Naive thymus-derived CD4-positive, alpha-beta T cell (primary cell): ENCODE measurements at regions of chr11 and their contacts with region 1.

Region 1: DNA sequence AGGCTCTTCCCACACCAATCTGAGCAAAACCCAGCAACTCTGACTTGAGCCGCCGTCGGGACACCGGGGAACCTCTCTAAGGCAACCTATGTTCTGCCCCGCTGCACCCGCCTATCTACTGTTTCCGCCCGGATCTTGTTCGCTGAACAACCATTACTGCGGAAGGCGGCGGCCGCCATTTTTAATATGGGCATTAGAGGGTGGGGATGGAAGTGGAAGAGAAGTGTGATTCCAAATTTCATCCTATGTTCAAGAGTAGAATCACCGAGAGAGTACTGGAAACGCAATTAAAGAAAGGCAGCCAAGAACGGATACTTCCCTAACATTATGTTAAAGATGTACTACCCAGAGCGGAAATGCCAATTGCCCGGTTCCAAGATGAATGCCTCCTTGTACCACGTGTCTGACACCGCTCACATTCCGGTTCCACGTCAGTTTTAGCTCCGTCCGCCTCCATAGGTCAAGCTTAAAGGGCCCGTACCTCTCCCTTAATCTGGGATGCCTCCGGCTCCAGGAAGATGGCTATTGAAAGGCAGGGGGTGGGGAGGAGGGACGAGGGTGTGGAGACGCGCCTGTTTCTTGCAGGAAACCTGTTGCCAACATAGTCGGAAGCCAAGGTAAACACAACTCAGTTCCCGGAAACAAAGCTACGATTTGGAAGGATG is at the start of gene DPAGT1:
- DNase-seq: peak; percentile 68 to 90 (median 86)
- ATAC-seq: peak; percentile 90
- H3K4me3 ChIP-seq: peak within 1 kb of the TSS; percentile 79
- H3K4me3 Mint-ChIP-seq: peak within 1 kb of the TSS; percentile 91 to 100 (median 96)
- H3K27ac ChIP-seq: peak within 1 kb of the TSS; percentile 95
- H3K27ac Mint-ChIP-seq: peak within 1 kb of the TSS; percentile 98 to 100 (median 99)
- H3K4me1 ChIP-seq: peaks cover 21 to 26% of the 10 kb centered on the region in 2 donors
- H3K4me1 Mint-ChIP-seq: peaks cover 24 to 64% (median 50%) of the 10 kb centered on the region in 7 donors
- H3K27me3 ChIP-seq: no peaks in the 10 kb centered on the region
- H3K27me3 Mint-ChIP-seq: no peaks in the 10 kb centered on the region
- total RNA-seq, gene DPAGT1: 21.9 to 63.9 (median 37.9) TPM

Region 2: DNA sequence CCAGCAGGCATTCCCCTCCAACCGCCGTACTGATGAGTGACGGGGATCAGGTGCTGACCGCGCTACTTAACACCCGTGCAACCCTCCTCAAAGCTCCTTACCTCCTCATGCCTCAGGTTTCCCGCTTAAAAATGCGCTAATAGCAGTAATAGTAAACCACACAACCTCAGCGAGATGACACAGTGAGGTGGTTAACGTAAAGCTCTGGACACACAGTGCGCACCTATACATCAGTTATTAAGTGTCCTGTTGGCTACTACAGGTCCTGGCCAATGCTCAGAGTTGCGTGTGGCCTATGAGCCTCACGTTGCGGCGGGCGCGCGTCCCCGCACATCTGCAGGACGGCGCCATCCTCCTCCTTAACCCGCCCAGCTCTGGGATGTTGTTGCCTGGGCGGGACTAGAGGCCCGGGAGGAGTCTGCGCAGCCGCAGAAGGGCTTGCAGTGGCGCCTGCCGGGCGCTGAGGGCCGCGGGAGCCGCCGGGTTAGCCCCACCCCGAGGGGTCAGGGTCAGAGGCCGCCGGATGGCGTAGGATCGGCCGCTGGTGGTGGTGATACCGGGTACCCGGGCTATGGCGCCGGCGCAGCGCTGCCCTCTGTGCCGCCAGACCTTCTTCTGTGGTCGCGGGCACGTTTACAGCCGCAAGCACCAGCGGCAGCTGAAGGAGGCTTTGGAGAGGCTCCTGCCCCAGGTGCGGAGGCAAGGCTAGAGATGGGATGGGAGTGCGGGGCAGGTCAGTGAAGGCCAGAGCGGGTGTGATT is 104.1 kb before region 1 on chr11 and contains the start of gene CENATAC:
- CTCF ChIA-PET with region 1: no interaction called
- POLR2A ChIA-PET with region 1: interaction called, 8 read pairs
- intact Hi-C with region 1: loop called (anchors 1 to 5 kb)
- DNase-seq: peak; percentile 91 to 98 (median 94)
- ATAC-seq: peak; percentile 98
- H3K4me3 ChIP-seq: peak within 1 kb of the TSS; percentile 91
- H3K4me3 Mint-ChIP-seq: peak within 1 kb of the TSS; percentile 87 to 99 (median 94)
- H3K27ac ChIP-seq: peak within 1 kb of the TSS; percentile 85
- H3K27ac Mint-ChIP-seq: peak within 1 kb of the TSS; percentile 87 to 98 (median 92)
- H3K4me1 ChIP-seq: peaks cover 6 to 16% of the 10 kb centered on the region in 2 donors
- H3K4me1 Mint-ChIP-seq: peaks cover 26 to 45% (median 37%) of the 10 kb centered on the region in 7 donors
- H3K27me3 ChIP-seq: no peaks in the 10 kb centered on the region
- H3K27me3 Mint-ChIP-seq: no peaks in the 10 kb centered on the region
- total RNA-seq, gene CENATAC: 53.5 to 136 (median 109) TPM

Region 3: GRCh38 chr11:119057000-119057769 is 44.7 kb before region 1 on chr11 and contains the start of gene HYOU1:
- CTCF ChIA-PET with region 1: interaction called, 4 read pairs
- POLR2A ChIA-PET with region 1: interaction called, 9 read pairs
- intact Hi-C with region 1: loop called (anchors 1 kb)
- DNase-seq: peak; percentile 97 to 98 (median 98)
- ATAC-seq: peak; percentile 98
- H3K4me3 ChIP-seq: peak within 1 kb of the TSS; percentile 73
- H3K4me3 Mint-ChIP-seq: peak within 1 kb of the TSS; percentile 90 to 99 (median 95)
- H3K27ac ChIP-seq: peak within 1 kb of the TSS; percentile 96
- H3K27ac Mint-ChIP-seq: peak within 1 kb of the TSS; percentile 86 to 99 (median 95)
- H3K4me1 ChIP-seq: peaks cover 18 to 20% of the 10 kb centered on the region in 2 donors
- H3K4me1 Mint-ChIP-seq: peaks cover 22 to 44% (median 35%) of the 10 kb centered on the region in 7 donors
- H3K27me3 ChIP-seq: no peaks in the 10 kb centered on the region
- H3K27me3 Mint-ChIP-seq: no peaks in the 10 kb centered on the region
- total RNA-seq, gene HYOU1: 77.8 to 198 (median 110) TPM

Region 4: GRCh38 chr11:119115484-119116234 is 13.8 kb after region 1 on chr11:
- CTCF ChIA-PET with region 1: interaction called, 13 read pairs
- POLR2A ChIA-PET with region 1: interaction called, 435 read pairs
- intact Hi-C with region 1: loop called in 1 of 2 experiments (anchors 1 kb)
- DNase-seq: peak in 7 of 9 donors; percentile 57 to 75 (median 72)
- ATAC-seq: peak; percentile 80
- H3K4me3 ChIP-seq: peak overlapping the region; percentile 31
- H3K4me3 Mint-ChIP-seq: peak overlapping the region; percentile 75 to 88 (median 84)
- H3K27ac ChIP-seq: peak overlapping the region; percentile 81
- H3K27ac Mint-ChIP-seq: peak overlapping the region; percentile 86 to 98 (median 97)
- H3K4me1 ChIP-seq: peaks cover 3 to 32% of the 10 kb centered on the region in 2 donors
- H3K4me1 Mint-ChIP-seq: peaks cover 34 to 63% (median 45%) of the 10 kb centered on the region in 7 donors
- H3K27me3 ChIP-seq: no peaks in the 10 kb centered on the region
- H3K27me3 Mint-ChIP-seq: no peaks in the 10 kb centered on the region

Region 5: DNA sequence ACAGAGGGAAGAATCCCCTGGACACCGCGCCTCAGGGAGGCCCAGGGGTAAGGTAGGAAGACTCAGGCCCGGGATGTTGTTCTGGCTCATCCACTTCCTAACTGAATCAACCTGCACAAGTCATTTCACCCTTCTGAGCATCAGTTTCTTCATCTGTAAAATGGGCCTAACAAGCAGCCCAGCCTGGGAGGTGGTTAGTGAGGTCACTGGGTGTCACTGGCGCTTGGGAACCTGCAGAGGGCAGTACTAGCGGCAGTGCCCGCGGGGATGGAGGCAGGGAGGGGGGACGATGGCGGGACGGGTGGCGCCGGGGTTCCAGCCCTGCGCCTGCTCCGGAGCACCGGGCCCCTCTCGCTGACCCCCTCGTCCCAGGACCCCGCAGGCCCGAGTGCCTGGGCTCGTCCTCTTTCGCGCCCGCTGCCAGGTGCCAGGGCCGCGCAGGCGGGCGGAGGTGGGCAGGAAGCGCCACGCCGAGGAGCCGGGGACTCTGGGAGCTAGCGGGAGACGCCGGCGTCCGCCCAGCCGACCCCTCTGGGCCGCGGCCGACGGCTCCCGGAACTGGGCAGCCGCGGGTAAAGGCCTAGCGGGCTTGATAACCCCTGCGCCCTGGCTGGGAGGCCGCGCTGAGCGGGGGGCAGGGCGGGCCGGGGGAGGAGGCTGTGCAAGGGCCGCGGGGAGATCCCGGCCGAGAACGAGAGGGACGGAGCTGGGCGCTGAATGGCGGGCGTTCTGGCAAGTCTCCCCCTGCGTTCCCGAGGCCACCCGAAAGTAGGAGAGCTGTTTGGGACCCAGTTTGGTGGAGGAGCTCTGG is 66.8 kb after region 1 on chr11 and contains the start of gene NLRX1:
- CTCF ChIA-PET with region 1: interaction called, 4 read pairs
- POLR2A ChIA-PET with region 1: interaction called, 8 read pairs
- intact Hi-C with region 1: loop called (anchors 2 to 5 kb)
- DNase-seq: peak; percentile 67 to 85 (median 82)
- ATAC-seq: peak; percentile 98
- H3K4me3 ChIP-seq: peak within 1 kb of the TSS; percentile 75
- H3K4me3 Mint-ChIP-seq: peak within 1 kb of the TSS; percentile 86 to 94 (median 90)
- H3K27ac ChIP-seq: peak within 1 kb of the TSS; percentile 73
- H3K27ac Mint-ChIP-seq: peak within 1 kb of the TSS; percentile 64 to 95 (median 87)
- H3K4me1 ChIP-seq: peaks cover 0 to 4% of the 10 kb centered on the region in 2 donors
- H3K4me1 Mint-ChIP-seq: peaks cover 4 to 25% (median 11%) of the 10 kb centered on the region in 7 donors
- H3K27me3 ChIP-seq: no peaks in the 10 kb centered on the region
- H3K27me3 Mint-ChIP-seq: no peaks in the 10 kb centered on the region
- total RNA-seq, gene NLRX1: 8.3 to 19.5 (median 9.8) TPM

Region 6: GRCh38 chr11:119273721-119274120 is 171.8 kb after region 1 on chr11:
- CTCF ChIA-PET with region 1: no interaction called
- POLR2A ChIA-PET with region 1: no interaction called
- intact Hi-C with region 1: no loop called
- DNase-seq: no peak
- ATAC-seq: no peak
- H3K4me3 ChIP-seq: no peak overlapping the region
- H3K4me3 Mint-ChIP-seq: no peak overlapping the region
- H3K27ac ChIP-seq: no peak overlapping the region
- H3K27ac Mint-ChIP-seq: peak overlapping the region in 5 of 9 donors; percentile 14 to 89 (median 41)
- H3K4me1 ChIP-seq: peaks cover 0 to 9% of the 10 kb centered on the region in 2 donors
- H3K4me1 Mint-ChIP-seq: peaks cover 3 to 55% (median 35%) of the 10 kb centered on the region in 7 donors
- H3K27me3 ChIP-seq: no peaks in the 10 kb centered on the region
- H3K27me3 Mint-ChIP-seq: no peaks in the 10 kb centered on the region